AG04449 (cell line): ENCODE measurements at regions of chr5 and their contacts with region 1.

Region 1: GRCh38 chr5:146965761-146966659 is 87.5 kb upstream of the PPP2R2B start:
- DNase-seq: peak; percentile 23
- H3K4me3 ChIP-seq: no peak overlapping the region
- CTCF ChIP-seq: peak; percentile 59

Region 2: GRCh38 chr5:146528236-146528635 is 437.8 kb before region 1 on chr5:
- CTCF ChIA-PET with region 1: interaction called, 214 read pairs
- POLR2A ChIA-PET with region 1: no interaction called
- DNase-seq: no peak
- H3K4me3 ChIP-seq: no peak overlapping the region
- CTCF ChIP-seq: no peak

Region 3: GRCh38 chr5:146541958-146542849 is 423.8 kb before region 1 on chr5:
- CTCF ChIA-PET with region 1: interaction called, 175 read pairs
- POLR2A ChIA-PET with region 1: no interaction called
- DNase-seq: no peak
- H3K4me3 ChIP-seq: no peak overlapping the region
- CTCF ChIP-seq: peak; percentile 92

Region 4: DNA sequence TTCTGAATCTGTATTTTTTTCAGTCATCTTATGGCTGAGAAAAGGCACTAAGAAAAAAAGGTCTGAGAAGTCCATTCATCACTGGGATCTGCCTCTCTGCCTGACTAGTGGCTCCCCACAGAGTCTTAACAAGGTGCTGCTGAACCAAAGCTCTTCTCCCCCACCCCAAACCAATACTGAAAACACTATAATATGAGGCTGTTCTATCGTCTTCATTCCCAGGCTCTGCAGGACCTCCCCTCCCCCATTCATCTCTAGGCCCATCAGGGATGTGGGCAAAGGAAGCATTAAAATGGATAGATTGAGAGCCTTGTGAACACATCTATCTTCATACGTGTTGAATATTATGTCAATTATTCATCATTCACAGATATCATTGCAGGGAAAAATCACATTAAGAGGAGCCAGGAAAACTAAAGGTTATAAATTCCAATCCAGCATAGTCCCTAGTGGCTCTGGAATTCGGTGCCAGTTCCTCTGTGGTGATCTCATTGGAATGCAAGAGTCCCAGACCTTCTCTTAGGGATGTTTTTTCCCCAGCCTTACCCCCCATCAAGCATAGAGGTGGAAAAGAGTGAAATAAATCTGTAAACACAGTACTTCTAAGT is 405.7 kb before region 1 on chr5:
- CTCF ChIA-PET with region 1: interaction called, 10 read pairs
- POLR2A ChIA-PET with region 1: no interaction called
- DNase-seq: no peak
- H3K4me3 ChIP-seq: no peak overlapping the region
- CTCF ChIP-seq: no peak

Region 5: DNA sequence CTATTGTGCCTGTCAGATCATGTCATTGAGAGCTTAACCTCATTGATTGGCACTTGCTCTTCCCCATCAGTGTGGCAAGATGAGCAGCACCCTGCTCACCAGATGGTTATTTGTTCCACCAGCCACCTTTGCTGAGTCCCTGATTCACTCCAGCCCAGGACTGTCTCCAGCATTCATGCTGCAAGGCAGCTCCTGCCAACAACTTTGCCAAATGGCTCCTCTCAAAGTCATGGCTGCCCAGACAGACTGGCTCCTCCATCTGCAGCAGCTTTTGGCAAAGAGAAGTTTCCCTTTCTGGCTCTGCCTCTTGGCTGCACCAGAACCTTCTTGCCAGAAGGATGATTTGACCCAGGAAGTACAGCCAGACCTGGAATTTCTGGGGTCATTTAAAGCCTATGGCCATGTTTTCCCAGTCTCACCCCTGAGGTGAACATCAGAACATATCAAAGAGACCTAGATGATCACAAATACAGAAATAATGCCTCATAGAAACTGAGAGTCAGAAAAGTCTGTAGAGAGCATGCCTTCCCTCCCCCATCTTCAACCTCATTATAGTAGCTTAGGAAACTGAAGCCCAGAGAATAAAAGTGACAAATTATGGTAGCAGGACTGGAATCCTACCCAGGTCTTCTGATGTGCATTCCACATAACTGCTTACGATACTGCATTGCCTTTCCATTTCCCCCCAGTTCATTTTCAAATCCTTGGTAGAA is 97.9 kb before region 1 on chr5:
- CTCF ChIA-PET with region 1: no interaction called
- POLR2A ChIA-PET with region 1: no interaction called
- DNase-seq: no peak
- H3K4me3 ChIP-seq: no peak overlapping the region
- CTCF ChIP-seq: no peak

Region 6: GRCh38 chr5:147188200-147189108 is 222.4 kb after region 1 on chr5:
- CTCF ChIA-PET with region 1: interaction called, 41 read pairs
- POLR2A ChIA-PET with region 1: no interaction called
- DNase-seq: no peak
- H3K4me3 ChIP-seq: no peak overlapping the region
- CTCF ChIP-seq: peak; percentile 57

Region 7: GRCh38 chr5:147601652-147602051 is 635.6 kb after region 1 on chr5:
- CTCF ChIA-PET with region 1: no interaction called
- POLR2A ChIA-PET with region 1: no interaction called
- DNase-seq: no peak
- H3K4me3 ChIP-seq: no peak overlapping the region
- CTCF ChIP-seq: no peak